ENCODE measurements at regions of chrX and their contacts with region 1.

Region 1: GRCh38 chrX:19372170-19372546 is 28.4 kb downstream of the PDHA1 start:
- DNase-seq: peak; percentile 72
- H3K4me3 ChIP-seq: peak overlapping the region; percentile 14 to 47 (median 40)
- H3K27ac ChIP-seq: no peak overlapping the region
- H3K4me1 ChIP-seq: peaks cover 0 to 10% (median 4%) of the 10 kb centered on the region in 4 donors
- H3K27me3 ChIP-seq: peaks cover 0 to 3% (median 0%) of the 10 kb centered on the region in 3 donors
- CTCF ChIP-seq: peak; percentile 32 to 58 (median 36)
- EP300 ChIP-seq: no peak
- POLR2A ChIP-seq: no peak

Region 2: DNA sequence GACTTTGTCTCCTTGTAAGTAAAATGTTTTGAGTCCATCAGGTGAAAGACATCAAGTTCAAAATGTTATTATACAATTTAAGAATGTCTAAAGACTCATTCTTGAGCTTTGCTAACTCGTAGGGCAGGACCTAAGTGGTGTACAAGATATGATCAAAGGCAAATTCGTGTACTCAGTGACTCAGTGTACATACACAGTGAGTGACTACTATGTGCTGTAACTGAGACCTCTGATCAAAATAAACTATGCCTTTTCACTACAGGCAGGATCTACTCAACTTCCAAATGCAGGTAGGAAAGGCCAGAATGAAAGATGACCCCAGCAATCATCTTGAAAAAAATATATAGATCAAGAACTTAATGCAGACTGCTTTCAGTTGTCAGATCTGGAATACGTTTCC is 299.8 kb before region 1 on chrX:
- intact Hi-C with region 1: no loop called
- DNase-seq: no peak
- H3K4me3 ChIP-seq: no peak overlapping the region
- H3K27ac ChIP-seq: no peak overlapping the region
- H3K4me1 ChIP-seq: no peaks in the 10 kb centered on the region
- H3K27me3 ChIP-seq: no peaks in the 10 kb centered on the region
- CTCF ChIP-seq: no peak
- EP300 ChIP-seq: no peak
- POLR2A ChIP-seq: no peak

Region 3: GRCh38 chrX:19514791-19515614 is 142.8 kb after region 1 on chrX and contains the start of gene MAP3K15:
- intact Hi-C with region 1: loop called (anchors 10 kb)
- DNase-seq: no peak
- H3K4me3 ChIP-seq: peak within 1 kb of the TSS in 3 of 4 donors; percentile 31 to 41 (median 40)
- H3K27ac ChIP-seq: no peak within 1 kb of the TSS
- H3K4me1 ChIP-seq: peaks cover 0 to 6% (median 0%) of the 10 kb centered on the region in 4 donors
- H3K27me3 ChIP-seq: peaks cover 0 to 32% (median 0%) of the 10 kb centered on the region in 3 donors
- CTCF ChIP-seq: peak in 1 of 4 experiments; percentile 10
- EP300 ChIP-seq: no peak
- POLR2A ChIP-seq: no peak
- total RNA-seq, gene MAP3K15: 0.14 TPM in 1 of 4 donors, not detected in the others

Measured in sigmoid colon (tissue), 7 donors.